MCF 10A (cell line): ENCODE measurements at regions of chr21 and their contacts with region 1.

Region 1: DNA sequence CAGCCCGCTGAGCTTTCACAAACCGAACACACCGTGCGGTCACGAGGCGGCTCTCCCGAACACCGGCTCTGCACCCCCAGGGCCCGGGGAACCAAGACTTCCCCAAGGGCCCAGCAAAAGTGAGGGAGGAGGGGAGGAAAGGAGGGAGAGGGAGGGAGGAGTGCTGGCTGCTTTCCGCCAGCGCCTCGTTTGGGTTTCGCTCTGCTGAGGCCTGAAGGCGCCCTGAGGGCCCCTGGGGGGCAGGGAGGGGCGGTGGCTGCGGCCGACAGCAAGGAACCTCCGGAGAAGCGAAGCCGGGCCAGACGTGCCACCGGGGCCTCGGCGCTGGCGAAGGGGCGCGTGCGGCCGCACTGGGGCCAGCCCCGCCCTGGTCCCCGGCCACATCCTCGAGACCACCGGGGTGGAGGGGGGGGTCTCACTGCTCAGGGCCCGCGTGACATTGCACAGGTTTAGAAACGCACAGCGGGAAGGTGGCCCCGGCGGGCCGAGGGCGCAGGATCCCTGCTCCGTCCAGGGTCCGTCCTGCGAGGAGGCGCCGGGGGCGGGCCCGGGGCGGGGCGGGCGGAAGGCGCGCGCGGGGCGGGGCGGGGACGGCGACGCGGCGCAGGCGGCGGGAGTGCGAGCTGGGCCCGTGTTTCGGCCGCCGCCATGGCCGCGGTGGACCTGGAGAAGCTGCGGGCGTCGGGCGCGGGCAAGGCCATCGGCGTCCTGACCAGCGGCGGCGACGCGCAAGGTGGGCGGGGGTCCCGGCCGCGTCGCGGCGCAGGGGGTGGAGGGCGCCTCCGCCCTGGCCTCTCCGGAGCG is at the start of gene PFKL:
- DNase-seq: peak; percentile 54
- H3K4me3 Mint-ChIP-seq: peak within 1 kb of the TSS; percentile 72
- H3K27ac Mint-ChIP-seq: peak within 1 kb of the TSS; percentile 69
- H3K4me1 Mint-ChIP-seq: no peaks in the 10 kb centered on the region
- H3K27me3 Mint-ChIP-seq: no peaks in the 10 kb centered on the region
- CTCF ChIP-seq: no peak
- total RNA-seq, gene PFKL: 68.0 and 90.2 TPM in 2 replicates

Region 2: DNA sequence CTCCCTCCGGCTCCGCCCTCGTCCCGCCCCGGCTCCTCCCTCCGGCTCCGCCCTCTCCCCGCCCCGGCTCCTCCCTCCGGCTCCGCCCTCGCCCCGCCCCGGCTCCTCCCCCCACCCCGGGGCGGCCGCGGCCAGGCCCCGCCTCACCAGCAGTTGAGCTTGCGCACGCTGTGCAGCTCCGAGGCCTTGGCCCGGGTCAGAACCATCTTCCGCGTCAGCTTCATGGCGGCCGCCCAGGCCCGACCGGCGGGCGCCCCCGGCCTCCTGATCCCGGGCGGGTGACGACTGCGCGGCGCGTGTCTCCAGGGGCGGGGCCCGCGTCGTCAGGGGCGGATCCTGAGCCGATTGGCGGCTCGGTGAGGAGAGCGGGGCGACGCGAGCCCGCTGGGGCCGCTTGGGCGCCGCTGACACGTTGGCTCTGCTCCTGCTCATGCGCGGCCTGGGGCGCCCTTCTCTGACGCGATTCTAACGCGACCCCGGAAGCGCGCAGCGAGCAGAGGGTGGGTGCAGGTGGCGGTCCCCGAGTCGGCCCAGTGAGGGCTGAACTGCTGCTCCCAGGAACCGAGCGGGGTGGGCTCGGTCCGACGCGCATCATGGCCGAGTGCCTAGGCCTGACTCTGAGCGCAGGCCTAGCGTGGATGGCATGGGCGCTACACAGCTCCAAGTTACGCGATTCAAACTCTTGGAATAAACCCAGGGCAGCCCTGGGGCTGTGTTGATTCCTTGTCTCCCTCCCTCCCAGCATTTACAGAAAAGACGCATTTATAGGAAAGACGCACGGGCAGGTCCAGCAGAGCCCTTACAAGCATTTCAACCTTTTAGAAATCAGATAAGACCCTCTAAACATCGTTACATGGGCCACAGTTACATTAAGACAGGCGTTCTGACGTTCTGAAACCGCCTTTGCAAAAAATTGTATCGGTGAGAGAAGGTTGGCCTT is 39.6 kb after region 1 on chr21 and contains the start of gene CFAP410:
- CTCF ChIA-PET with region 1: interaction called, 8 read pairs
- POLR2A ChIA-PET with region 1: interaction called, 10 read pairs
- intact Hi-C with region 1: no loop called
- DNase-seq: peak; percentile 89
- H3K4me3 Mint-ChIP-seq: peak within 1 kb of the TSS; percentile 87
- H3K27ac Mint-ChIP-seq: peak within 1 kb of the TSS; percentile 95
- H3K4me1 Mint-ChIP-seq: peaks cover 4% of the 10 kb centered on the region
- H3K27me3 Mint-ChIP-seq: no peaks in the 10 kb centered on the region
- CTCF ChIP-seq: no peak
- total RNA-seq, gene CFAP410: 10.1 and 13.3 TPM in 2 replicates